Activated CD4-positive, alpha-beta memory T cell treated with anti-CD3 and anti-CD28 coated beads for 36 hours (primary cell): ENCODE measurements at regions of chr12 and their contacts with region 1.

Region 1: GRCh38 chr12:109477185-109477962 is at the starts of genes KCTD10 and UBE3B:
- DNase-seq: peak; percentile 90
- H3K4me3 Mint-ChIP-seq: peak within 1 kb of the TSS; percentile 91
- H3K27ac Mint-ChIP-seq: peak within 1 kb of the TSS; percentile 98
- H3K4me1 Mint-ChIP-seq: peaks cover 35% of the 10 kb centered on the region
- H3K27me3 Mint-ChIP-seq: no peaks in the 10 kb centered on the region
- total RNA-seq, gene KCTD10: 36.2 to 40.3 TPM
- total RNA-seq, gene UBE3B: 29.8 to 32.3 TPM

Region 2: DNA sequence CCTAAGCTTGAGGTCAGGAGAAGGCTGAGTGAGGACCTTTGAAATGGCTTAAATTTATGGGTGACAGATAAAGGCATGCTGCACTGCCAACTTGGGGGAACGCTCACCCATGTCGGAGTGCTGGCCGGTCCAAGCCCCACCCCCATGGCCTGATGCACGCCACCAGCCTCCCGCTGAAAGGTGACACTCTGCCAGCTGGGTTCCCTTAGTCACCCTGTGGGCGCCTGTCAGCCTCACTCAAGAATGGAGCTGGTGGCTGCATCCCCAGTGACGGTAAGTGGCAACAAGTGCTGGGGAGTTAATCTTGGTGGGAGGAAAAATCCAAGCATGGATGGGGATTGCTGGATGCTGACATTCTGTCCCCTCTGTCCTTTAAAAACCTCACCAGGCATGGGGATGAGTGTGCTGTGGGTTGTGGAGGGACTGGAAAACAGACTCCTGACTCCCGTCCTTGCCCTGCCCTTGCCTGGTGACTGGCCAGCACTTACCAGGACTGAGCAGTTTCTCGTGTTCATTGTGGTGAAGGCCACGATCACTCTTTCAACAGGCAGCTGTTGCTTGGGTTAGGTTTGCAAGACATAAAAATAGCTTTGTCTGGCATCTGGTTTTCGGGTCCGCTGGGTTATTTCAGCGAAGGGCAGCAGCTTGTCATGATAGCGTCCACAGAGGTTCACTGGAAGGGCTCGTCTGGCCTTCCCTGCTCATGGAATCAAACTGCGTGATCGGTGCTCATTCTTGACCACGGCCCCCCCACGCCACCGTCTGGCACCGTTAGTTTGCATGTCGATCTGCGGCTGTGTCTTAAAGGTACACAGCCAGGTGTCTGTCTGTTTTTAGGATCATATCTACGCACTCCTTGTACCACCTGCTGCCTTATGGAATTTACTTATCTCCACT is 346.0 kb before region 1 on chr12:
- CTCF ChIA-PET with region 1: no interaction called
- POLR2A ChIA-PET with region 1: no interaction called
- intact Hi-C with region 1: no loop called
- DNase-seq: no peak
- H3K4me3 Mint-ChIP-seq: no peak overlapping the region
- H3K27ac Mint-ChIP-seq: no peak overlapping the region
- H3K4me1 Mint-ChIP-seq: no peaks in the 10 kb centered on the region
- H3K27me3 Mint-ChIP-seq: no peaks in the 10 kb centered on the region

Region 3: DNA sequence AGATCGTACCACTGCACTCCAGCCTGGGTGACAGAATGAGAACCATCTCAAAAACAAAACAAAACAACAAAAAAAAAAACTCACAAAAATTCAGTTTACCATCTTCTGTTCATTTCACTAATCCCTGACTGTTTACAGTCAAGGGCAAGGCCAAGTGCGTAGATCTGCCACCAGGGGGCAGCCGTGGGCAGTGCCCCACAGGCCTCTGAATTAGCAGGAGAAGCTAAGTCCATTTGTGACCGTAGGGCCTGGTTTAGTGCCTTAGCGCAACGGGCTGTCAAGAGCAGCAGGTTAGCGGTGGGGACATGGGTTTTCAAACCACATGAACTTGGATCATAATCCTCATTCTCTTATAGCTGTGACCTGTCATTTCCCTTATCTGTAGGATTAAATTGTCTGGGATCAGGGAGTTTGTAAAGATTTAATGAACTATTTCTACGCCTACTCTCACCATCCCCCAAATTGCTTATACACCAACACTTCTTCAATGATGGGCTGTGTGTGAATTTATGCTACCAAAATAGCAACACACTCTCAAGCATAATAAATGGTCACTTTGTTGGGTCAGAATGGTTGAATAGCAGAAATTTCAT is 49.2 kb before region 1 on chr12:
- CTCF ChIA-PET with region 1: interaction called, 13 read pairs
- POLR2A ChIA-PET with region 1: no interaction called
- intact Hi-C with region 1: loop called (anchors 2 kb)
- DNase-seq: peak; percentile 80
- H3K4me3 Mint-ChIP-seq: no peak overlapping the region
- H3K27ac Mint-ChIP-seq: no peak overlapping the region
- H3K4me1 Mint-ChIP-seq: peaks cover 1% of the 10 kb centered on the region
- H3K27me3 Mint-ChIP-seq: peaks cover 2% of the 10 kb centered on the region

Region 4: GRCh38 chr12:109462710-109463692 is 14.4 kb before region 1 on chr12:
- CTCF ChIA-PET with region 1: no interaction called
- POLR2A ChIA-PET with region 1: no interaction called
- intact Hi-C with region 1: loop called (anchors 2 kb)
- DNase-seq: no peak
- H3K4me3 Mint-ChIP-seq: no peak overlapping the region
- H3K27ac Mint-ChIP-seq: no peak overlapping the region
- H3K4me1 Mint-ChIP-seq: peaks cover 41% of the 10 kb centered on the region
- H3K27me3 Mint-ChIP-seq: no peaks in the 10 kb centered on the region

Region 5: GRCh38 chr12:109573029-109573913 is 95.9 kb after region 1 on chr12 and contains the starts of genes MMAB and MVK:
- CTCF ChIA-PET with region 1: no interaction called
- POLR2A ChIA-PET with region 1: interaction called, 10 read pairs
- intact Hi-C with region 1: loop called (anchors 1 kb)
- DNase-seq: peak; percentile 100
- H3K4me3 Mint-ChIP-seq: peak within 1 kb of the TSS; percentile 86
- H3K27ac Mint-ChIP-seq: peak within 1 kb of the TSS; percentile 85
- H3K4me1 Mint-ChIP-seq: peaks cover 27% of the 10 kb centered on the region
- H3K27me3 Mint-ChIP-seq: no peaks in the 10 kb centered on the region
- total RNA-seq, gene MMAB: 42.4 to 48.3 TPM
- total RNA-seq, gene MVK: 21.2 TPM

Region 6: DNA sequence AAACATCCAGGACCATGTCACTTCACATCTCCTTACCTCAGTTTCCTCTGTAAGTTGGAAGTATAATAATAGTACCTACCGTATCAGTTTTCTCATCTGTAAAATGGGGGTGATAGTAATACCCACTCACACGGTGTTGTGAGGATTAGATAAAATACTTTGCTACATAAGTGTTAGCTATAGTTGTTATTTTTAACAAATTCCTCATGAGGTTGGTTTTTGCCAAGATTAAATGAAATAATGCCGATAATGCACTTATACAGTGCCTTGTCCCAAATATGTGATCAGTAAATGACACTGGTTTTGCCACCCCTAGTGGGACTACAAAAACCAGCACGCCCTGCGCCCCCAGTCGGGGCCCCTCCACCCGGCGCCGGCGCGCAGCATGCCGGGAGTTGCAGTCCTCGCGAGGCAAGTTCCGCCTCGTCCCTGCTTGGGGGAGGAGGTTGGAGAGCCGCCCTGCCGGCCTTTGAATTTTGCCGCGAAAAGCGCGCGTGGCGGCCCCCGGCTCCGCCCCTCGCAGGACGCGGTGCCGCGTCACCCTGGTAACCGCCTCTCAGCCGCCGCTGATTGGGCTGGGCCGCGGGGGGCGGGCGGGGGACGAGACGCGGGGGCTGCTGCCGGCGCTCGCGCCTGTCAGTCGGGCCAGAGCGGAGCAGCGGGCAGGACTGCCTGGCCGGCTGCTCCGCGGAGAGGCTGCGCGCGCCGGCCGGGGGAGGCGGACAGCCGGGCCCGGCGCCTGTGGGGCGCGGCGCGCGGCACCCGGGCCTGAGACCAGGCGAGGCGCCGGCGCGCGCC is 236.0 kb after region 1 on chr12 and contains the start of gene FAM222A:
- CTCF ChIA-PET with region 1: no interaction called
- POLR2A ChIA-PET with region 1: no interaction called
- intact Hi-C with region 1: loop called (anchors 1 kb)
- DNase-seq: peak; percentile 96
- H3K4me3 Mint-ChIP-seq: peak within 1 kb of the TSS; percentile 59
- H3K27ac Mint-ChIP-seq: no peak within 1 kb of the TSS
- H3K4me1 Mint-ChIP-seq: no peaks in the 10 kb centered on the region
- H3K27me3 Mint-ChIP-seq: peaks cover 31% of the 10 kb centered on the region
- total RNA-seq, gene FAM222A: 0.29 to 0.55 TPM

Region 7: DNA sequence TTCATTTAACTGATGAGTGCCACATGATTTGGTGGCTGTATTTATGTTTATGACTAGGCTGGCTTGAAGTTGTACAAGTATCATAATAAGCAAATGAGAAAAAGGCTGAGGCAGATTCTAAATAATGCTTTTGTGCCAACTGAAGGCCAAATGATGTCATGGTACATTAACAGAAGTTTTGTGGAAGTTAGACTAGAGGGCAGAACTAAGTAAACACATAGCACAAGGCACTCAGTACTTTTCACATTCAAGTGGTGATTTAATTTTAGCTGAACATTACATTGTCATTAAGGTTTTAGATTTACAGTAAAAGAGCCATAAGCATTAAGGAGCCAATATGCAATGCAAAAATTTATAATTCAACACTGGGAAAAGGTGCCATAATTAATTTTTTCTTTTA is 1244.2 kb after region 1 on chr12:
- CTCF ChIA-PET with region 1: no interaction called
- POLR2A ChIA-PET with region 1: no interaction called
- intact Hi-C with region 1: no loop called
- DNase-seq: no peak
- H3K4me3 Mint-ChIP-seq: no peak overlapping the region
- H3K27ac Mint-ChIP-seq: peak overlapping the region; percentile 6
- H3K4me1 Mint-ChIP-seq: peaks cover 36% of the 10 kb centered on the region
- H3K27me3 Mint-ChIP-seq: no peaks in the 10 kb centered on the region